ENCODE measurements at regions of chr17 and their contacts with region 1.

Region 1: GRCh38 chr17:9402590-9403199 is 172.9 kb downstream of the STX8 start:
- DNase-seq: peak; percentile 9
- H3K4me3 Mint-ChIP-seq: no peak overlapping the region
- H3K27ac Mint-ChIP-seq: no peak overlapping the region
- H3K4me1 Mint-ChIP-seq: no peaks in the 10 kb centered on the region
- H3K27me3 Mint-ChIP-seq: no peaks in the 10 kb centered on the region

Region 2: GRCh38 chr17:9529033-9529700 is 126.5 kb after region 1 on chr17:
- intact Hi-C with region 1: loop called (anchors 1 kb)
- DNase-seq: no peak
- H3K4me3 Mint-ChIP-seq: no peak overlapping the region
- H3K27ac Mint-ChIP-seq: no peak overlapping the region
- H3K4me1 Mint-ChIP-seq: peaks cover 8% of the 10 kb centered on the region
- H3K27me3 Mint-ChIP-seq: no peaks in the 10 kb centered on the region

Region 3: GRCh38 chr17:9557161-9557755 is 154.6 kb after region 1 on chr17:
- intact Hi-C with region 1: loop called (anchors 10 kb)
- DNase-seq: no peak
- H3K4me3 Mint-ChIP-seq: no peak overlapping the region
- H3K27ac Mint-ChIP-seq: no peak overlapping the region
- H3K4me1 Mint-ChIP-seq: no peaks in the 10 kb centered on the region
- H3K27me3 Mint-ChIP-seq: no peaks in the 10 kb centered on the region

Measured in activated T-helper 1 cell treated with anti-CD3 and anti-CD28 coated beads, Interleukin-12 subunit alpha, Interleukin-12 subunit beta, Interleukin-2, Interleukin-4 antibody, amounts not matched to agents 30 ng/mL and 10 ng/mL and 1 ng/mL, durations not matched to agents 14 hours and 24 hours and 36 hours (primary cell).